Breast epithelium (tissue), 4 donors: ENCODE measurements at regions of chr5 and their contacts with region 1.

Region 1: GRCh38 chr5:56269216-56269927 is 36.2 kb upstream of the ANKRD55 start:
- DNase-seq: no peak
- H3K4me3 ChIP-seq: no peak overlapping the region
- H3K27ac ChIP-seq: no peak overlapping the region
- H3K4me1 ChIP-seq: no peaks in the 10 kb centered on the region
- H3K27me3 ChIP-seq: no peaks in the 10 kb centered on the region
- CTCF ChIP-seq: peak; percentile 32 to 56 (median 41)
- POLR2A ChIP-seq: no peak

Region 2: DNA sequence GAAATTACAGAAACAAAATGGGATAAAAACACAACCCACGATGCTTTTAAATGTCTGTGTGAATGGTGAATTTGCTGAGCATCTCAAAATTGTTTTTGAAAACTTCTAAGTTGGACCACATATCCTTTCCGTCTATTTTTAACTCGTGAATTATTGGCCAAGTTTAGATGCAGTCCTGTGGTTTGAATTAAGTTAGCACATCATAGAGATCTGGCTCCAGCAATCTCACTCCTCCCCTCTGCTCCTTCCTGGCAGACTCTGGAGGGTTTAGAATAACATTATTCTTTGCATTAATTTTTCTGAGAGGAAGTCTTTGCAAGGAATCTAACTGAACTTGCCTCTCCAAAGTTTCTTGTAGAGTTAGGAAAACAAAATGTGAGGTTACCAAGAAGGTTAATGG is 21.8 kb before region 1 on chr5:
- intact Hi-C with region 1: no loop called
- DNase-seq: no peak
- H3K4me3 ChIP-seq: no peak overlapping the region
- H3K27ac ChIP-seq: no peak overlapping the region
- H3K4me1 ChIP-seq: no peaks in the 10 kb centered on the region
- H3K27me3 ChIP-seq: no peaks in the 10 kb centered on the region
- CTCF ChIP-seq: no peak
- POLR2A ChIP-seq: no peak

Region 3: GRCh38 chr5:56323505-56323904 is 54.1 kb after region 1 on chr5:
- intact Hi-C with region 1: no loop called
- DNase-seq: peak in 1 of 2 donors; percentile 30
- H3K4me3 ChIP-seq: no peak overlapping the region
- H3K27ac ChIP-seq: no peak overlapping the region
- H3K4me1 ChIP-seq: no peaks in the 10 kb centered on the region
- H3K27me3 ChIP-seq: no peaks in the 10 kb centered on the region
- CTCF ChIP-seq: no peak
- POLR2A ChIP-seq: no peak

Region 4: DNA sequence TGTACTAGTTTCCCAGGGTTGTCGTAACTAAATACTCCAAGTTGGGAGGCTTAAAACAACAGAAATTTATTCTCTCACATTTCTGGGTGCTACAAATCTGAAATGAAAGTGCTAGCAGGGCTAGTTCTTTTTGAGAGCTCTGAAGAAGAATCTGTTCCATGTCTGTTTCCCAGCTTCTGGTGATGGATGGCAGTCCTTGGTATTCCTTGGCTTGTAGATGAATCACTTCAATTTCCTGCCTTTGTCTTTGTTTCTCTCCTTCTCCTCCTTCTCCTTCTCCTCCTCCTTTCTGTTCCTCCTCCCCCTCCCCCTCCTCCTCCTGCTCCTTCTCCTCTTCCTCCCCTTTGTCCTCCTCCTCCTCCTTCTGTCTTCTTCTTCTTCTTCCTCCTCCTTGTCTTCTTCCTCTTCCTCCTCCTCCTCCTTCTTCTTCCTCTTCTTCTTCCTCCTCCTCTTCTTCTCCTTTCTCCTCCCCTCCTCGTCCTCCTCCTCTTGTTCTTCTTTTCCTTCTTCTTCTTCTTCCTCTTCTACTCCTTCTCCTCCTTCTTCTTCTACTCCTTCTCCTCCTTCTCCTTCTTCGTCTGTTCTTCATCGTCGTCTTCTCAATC is 68.4 kb after region 1 on chr5:
- intact Hi-C with region 1: no loop called
- DNase-seq: no peak
- H3K4me3 ChIP-seq: no peak overlapping the region
- H3K27ac ChIP-seq: no peak overlapping the region
- H3K4me1 ChIP-seq: no peaks in the 10 kb centered on the region
- H3K27me3 ChIP-seq: no peaks in the 10 kb centered on the region
- CTCF ChIP-seq: no peak
- POLR2A ChIP-seq: no peak

Region 5: DNA sequence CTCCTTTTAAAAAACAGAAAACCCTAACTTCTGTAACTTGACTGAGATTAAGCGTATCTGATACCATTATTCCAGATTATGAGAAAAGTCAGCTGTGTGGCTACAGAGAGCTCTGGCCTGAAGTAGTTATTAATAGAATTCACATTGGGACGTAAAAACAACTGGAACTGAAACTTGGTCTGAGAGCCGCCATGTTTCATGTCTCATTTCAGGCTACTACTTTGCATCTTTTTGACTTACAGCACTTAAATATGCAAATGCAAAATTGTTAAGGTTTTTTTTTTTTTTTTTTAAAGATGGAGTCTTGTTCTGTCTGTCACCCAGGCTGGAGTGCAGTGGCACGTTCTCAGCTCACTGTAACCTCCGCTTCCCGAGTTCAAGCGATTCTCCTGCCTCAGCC is 571.2 kb after region 1 on chr5:
- intact Hi-C with region 1: loop called (anchors 10 kb)
- DNase-seq: no peak
- H3K4me3 ChIP-seq: no peak overlapping the region
- H3K27ac ChIP-seq: no peak overlapping the region
- H3K4me1 ChIP-seq: peaks cover 0 to 8% of the 10 kb centered on the region in 2 donors
- H3K27me3 ChIP-seq: no peaks in the 10 kb centered on the region
- CTCF ChIP-seq: no peak
- POLR2A ChIP-seq: no peak

Region 6: GRCh38 chr5:58094031-58094430 is 1824.7 kb after region 1 on chr5:
- intact Hi-C with region 1: no loop called
- DNase-seq: peak in 1 of 2 donors; percentile 39
- H3K4me3 ChIP-seq: no peak overlapping the region
- H3K27ac ChIP-seq: peak overlapping the region; percentile 23 to 30
- H3K4me1 ChIP-seq: no peaks in the 10 kb centered on the region
- H3K27me3 ChIP-seq: no peaks in the 10 kb centered on the region
- CTCF ChIP-seq: no peak
- POLR2A ChIP-seq: no peak